Right ventricle myocardium inferior (tissue), 1 donor: ENCODE measurements at regions of chr19 and their contacts with region 1.

Region 1: DNA sequence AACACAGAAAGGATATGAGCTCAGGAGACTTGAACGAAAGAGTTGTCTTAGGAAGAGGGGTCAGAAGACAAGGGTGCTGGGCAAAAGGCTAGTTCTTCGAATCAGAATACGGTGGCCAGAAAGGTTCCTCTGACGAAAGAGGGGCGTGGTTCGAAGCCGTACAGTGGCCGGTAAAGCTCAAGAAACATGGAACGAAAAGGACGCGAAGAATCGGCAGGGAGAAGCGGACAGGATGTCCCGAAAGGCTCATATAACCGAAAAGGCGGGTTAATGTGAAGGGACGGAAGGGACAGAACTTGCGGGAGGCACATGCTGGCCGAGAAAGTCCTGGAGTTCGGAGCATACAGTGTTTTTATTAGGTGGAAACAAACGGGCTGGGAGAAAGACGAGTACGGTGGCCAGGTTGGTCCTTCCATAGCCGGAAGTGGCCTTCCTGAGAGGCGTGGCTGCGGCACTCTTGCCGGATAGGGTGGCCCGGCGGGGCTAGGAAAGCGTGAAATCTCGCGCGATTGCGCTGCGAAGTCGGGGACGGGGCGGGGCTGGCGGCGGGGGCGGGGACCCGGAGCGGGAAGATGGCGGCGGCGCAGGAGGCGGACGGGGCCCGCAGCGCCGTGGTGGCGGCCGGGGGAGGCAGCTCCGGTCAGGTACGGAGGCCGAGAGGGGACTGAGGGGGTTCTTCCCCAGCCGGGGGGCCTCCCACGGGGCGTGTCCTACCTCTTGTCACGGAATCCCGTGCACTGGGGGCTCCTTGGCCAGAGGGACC is at the start of gene CLPTM1:
- DNase-seq: peak; percentile 98
- ATAC-seq: peak; percentile 97
- total RNA-seq, gene CLPTM1: 90.1 TPM

Region 2: DNA sequence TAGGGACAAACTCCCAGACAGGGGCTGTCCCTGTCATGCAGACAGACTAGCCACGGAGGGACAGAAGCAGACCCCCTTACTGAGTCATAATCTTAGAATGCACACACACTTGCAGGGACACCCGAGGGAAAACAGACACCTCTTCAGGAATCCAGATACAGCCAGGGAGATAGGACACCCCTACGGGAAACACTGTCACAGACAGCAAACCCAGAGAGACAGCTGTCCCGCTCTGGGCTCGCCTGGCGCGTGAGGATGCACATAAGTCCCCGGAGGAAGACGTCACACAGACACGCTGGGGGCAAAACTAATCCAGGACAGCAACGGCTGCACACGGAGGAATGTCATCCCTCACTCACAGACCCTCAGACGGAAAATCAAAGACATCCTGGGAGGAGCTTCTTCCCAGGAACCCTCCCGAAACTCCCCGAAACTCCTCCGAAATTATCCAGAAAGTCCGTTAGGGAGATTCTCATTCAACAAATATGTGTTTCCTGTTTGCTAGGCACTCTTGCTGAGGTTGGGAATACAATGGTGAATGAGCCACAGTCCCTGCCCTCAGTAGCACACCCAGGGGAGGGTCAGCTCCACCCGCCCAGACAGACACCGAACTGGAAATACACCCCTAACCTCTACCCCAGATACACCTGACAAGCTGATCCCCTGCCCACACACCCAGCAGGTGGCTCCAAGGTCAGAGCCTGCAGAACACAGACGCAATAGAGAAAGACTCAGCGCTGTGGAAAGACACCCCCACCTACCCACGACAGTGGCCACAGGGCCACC is 79.1 kb before region 1 on chr19:
- intact Hi-C with region 1: no loop called
- DNase-seq: peak; percentile 18
- ATAC-seq: no peak

Region 3: DNA sequence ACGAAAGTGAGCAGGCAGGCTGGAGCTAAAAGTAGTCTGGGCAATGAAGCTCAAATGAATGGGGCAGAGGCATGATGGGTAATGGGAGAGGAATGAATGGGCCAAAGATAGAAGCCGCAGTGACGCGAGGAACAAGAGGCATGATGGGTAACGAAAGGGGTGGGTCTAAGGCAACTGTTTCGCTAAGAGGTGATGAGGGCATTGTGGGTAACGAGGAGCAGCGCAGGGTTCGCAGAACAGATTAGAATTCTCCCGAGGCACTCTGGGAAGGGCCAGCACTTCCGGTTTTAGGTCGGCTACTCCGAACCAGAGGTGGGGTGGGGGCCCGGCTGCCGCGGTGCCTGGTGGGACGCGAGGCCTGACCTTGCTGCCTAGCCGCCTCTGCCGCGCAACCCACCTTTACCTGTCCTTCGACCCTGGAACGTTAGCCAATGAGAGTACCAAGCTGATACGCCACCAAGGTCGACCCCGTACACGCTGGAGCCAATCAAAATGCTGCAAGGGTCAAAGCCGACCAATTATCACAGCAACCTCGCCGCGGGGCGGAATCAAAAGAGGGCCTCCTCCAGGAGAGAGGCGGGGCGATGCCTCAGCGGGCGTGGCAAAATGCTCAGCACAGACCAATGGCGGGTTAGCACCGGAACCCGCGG is 64.5 kb before region 1 on chr19:
- intact Hi-C with region 1: loop called (anchors 2 kb)
- DNase-seq: no peak
- ATAC-seq: peak; percentile 93

Region 4: DNA sequence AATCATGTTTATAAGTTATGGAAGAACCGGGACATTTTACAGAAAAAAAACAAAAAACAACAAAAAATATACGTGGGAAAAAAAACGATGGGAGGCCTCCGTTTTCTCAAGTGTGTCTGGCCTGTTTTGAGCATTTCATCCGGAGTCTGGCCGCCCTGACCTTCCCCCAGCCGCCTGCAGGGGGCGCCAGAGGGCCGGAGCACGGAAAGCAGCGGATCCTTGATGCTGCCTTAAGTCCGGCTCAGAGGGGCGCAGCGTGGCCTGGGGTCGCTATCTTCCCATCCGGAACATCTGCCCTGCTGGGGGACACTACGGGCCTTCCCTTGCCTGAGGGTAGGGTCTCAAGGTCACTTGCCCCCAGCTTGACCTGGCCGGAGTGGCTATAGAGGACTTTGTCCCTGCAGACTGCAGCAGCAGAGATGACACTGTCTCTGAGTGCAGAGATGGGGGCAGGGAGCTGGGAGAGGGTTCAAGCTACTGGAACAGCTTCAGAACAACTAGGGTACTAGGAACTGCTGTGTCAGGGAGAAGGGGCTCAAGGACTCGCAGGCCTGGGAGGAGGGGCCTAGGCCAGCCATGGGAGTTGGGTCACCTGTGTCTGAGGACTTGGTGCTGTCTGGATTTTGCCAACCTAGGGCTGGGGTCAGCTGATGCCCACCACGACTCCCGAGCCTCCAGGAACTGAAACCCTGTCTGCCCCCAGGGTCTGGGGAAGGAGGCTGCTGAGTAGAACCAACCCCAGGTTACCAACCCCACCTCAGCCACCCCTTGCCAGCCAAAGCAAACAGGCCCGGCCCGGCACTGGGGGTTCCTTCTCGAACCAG is 51.2 kb before region 1 on chr19:
- intact Hi-C with region 1: loop called (anchors 2 kb)
- DNase-seq: peak; percentile 89
- ATAC-seq: peak; percentile 69

Region 5: GRCh38 chr19:44925114-44925891 is 29.7 kb before region 1 on chr19:
- intact Hi-C with region 1: no loop called
- DNase-seq: peak; percentile 89
- ATAC-seq: peak; percentile 85

Region 6: GRCh38 chr19:44993926-44994537 is 39.0 kb after region 1 on chr19:
- intact Hi-C with region 1: no loop called
- DNase-seq: no peak
- ATAC-seq: no peak